ENCODE measurements at regions of chr16 and their contacts with region 1.

Region 1: GRCh38 chr16:81403616-81404373 is 40.8 kb upstream of the CMIP start:
- DNase-seq: peak; percentile 86 to 88
- ATAC-seq: peak; percentile 81 to 95 (median 93)
- H3K4me3 ChIP-seq: peak overlapping the region in 7 of 10 donors; percentile 13 to 44 (median 20)
- H3K27ac ChIP-seq: peak overlapping the region in 1 of 10 donors; percentile 34
- H3K4me1 ChIP-seq: peaks cover 0 to 33% (median 10%) of the 10 kb centered on the region in 9 donors
- H3K27me3 ChIP-seq: peaks cover 0 to 5% (median 0%) of the 10 kb centered on the region in 7 donors
- CTCF ChIP-seq: peak; percentile 93 to 98 (median 97)

Region 2: DNA sequence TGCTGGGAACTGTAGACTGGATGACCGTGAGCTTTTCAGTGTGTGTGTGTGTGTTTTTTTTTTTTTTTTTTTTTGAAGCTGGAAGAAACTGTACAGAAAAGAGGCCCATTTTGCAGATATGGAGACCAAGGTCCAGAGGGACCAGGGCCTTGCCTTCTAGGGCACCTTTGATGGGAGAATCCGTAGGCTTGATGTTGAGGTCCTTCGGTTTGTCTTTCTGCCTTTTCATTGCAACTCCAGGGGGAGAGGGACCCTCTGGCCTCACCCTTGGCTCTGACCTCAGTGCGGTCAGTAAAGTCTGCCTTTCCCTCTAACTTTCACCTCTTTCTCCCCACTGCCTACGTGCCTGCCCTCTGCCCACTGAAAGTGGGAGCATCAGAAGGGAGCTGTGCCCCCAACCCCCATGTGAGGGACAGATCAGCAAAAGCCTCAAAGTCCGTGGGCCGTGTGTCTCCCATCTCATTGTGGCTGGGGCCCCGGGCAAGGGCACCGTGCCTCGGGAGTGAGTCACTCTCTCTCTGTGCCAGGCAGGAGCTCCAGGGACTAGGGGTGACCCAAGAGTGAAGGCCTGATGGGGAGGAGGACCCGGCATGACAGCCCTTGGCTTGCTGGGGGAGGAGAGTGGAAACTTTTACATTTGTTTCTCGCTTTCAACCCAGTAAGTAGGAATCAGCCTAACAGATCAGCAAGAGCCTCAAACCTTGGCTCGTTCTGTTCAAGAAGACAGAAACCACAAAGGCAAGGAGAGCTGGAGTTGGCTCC is 164.4 kb after region 1 on chr16:
- intact Hi-C with region 1: loop called in 1 of 10 experiments (anchors 5 kb)
- DNase-seq: peak; percentile 32 to 43
- ATAC-seq: peak in 7 of 8 donors; percentile 41 to 87 (median 65)
- H3K4me3 ChIP-seq: no peak overlapping the region
- H3K27ac ChIP-seq: no peak overlapping the region
- H3K4me1 ChIP-seq: peaks cover 0 to 33% (median 16%) of the 10 kb centered on the region in 9 donors
- H3K27me3 ChIP-seq: no peaks in the 10 kb centered on the region
- CTCF ChIP-seq: no peak

Region 3: GRCh38 chr16:81623363-81624102 is 219.7 kb after region 1 on chr16:
- intact Hi-C with region 1: loop called in 9 of 10 experiments (anchors 1 to 10 kb)
- DNase-seq: no peak
- ATAC-seq: peak in 1 of 8 donors; percentile 19
- H3K4me3 ChIP-seq: no peak overlapping the region
- H3K27ac ChIP-seq: peak overlapping the region in 1 of 10 donors; percentile 12
- H3K4me1 ChIP-seq: peaks cover 0 to 25% (median 13%) of the 10 kb centered on the region in 9 donors
- H3K27me3 ChIP-seq: no peaks in the 10 kb centered on the region
- CTCF ChIP-seq: peak in 8 of 9 donors; percentile 34 to 73 (median 61)

Region 4: GRCh38 chr16:81723098-81723723 is 319.4 kb after region 1 on chr16:
- intact Hi-C with region 1: loop called (anchors 1 to 10 kb)
- DNase-seq: peak in 1 of 2 donors; percentile 75
- ATAC-seq: peak; percentile 88 to 95 (median 94)
- H3K4me3 ChIP-seq: no peak overlapping the region
- H3K27ac ChIP-seq: no peak overlapping the region
- H3K4me1 ChIP-seq: peaks cover 0 to 9% (median 0%) of the 10 kb centered on the region in 9 donors
- H3K27me3 ChIP-seq: peaks cover 0 to 6% (median 0%) of the 10 kb centered on the region in 7 donors
- CTCF ChIP-seq: peak; percentile 61 to 84 (median 76)

Region 5: GRCh38 chr16:81737885-81738786 is 334.3 kb after region 1 on chr16:
- intact Hi-C with region 1: loop called in 1 of 10 experiments (anchors 5 kb)
- DNase-seq: peak; percentile 68 to 89
- ATAC-seq: peak; percentile 87 to 97 (median 94)
- H3K4me3 ChIP-seq: peak overlapping the region in 7 of 10 donors; percentile 12 to 43 (median 32)
- H3K27ac ChIP-seq: peak overlapping the region in 5 of 10 donors; percentile 25 to 79 (median 61)
- H3K4me1 ChIP-seq: peaks cover 0 to 24% (median 9%) of the 10 kb centered on the region in 9 donors
- H3K27me3 ChIP-seq: peaks cover 0 to 9% (median 0%) of the 10 kb centered on the region in 7 donors
- CTCF ChIP-seq: peak; percentile 61 to 91 (median 85)